ENCODE measurements at regions of chr7 and their contacts with region 1.

Region 1: DNA sequence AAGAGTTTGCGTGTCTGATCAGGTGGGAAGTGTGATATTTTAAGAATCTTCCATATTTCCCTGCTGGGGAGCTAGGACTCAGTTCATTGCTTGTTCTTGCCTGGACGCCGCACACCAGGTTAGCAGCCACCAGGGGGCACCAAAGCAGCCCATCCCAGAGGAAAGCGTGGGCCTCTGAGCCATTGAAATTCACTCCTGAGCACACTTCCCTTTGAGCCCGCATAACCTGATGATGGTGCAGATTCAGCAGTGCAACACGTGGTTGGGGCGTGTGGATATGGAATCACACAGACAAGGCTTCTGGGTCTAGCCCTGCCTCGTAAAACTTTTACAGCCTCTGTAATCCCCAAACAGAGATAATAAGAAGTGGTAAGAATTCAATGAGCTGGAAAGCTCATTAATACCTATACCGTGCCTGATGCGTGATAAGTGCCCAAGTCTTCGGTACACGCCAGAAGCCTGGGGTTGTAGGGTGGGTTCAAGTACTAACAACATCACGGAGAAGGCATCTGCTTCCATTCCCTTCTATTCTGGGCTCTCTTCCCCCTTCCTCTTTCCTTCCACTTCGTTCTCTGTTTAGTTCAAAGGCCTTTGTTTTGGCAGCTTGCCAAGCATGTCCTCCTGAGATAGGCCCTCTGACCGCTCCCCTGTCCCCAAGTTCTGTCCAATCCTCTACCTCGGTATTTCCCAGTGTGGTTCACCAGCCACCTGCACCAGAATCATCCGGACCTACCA is 130.1 kb upstream of the KMT2E start:
- DNase-seq: peak; percentile 90

Region 2: GRCh38 chr7:104848138-104848990 is 35.5 kb before region 1 on chr7:
- CTCF ChIA-PET with region 1: interaction called, 11 read pairs
- POLR2A ChIA-PET with region 1: no interaction called
- DNase-seq: peak; percentile 50

Region 3: GRCh38 chr7:104873346-104873849 is 10.5 kb before region 1 on chr7:
- CTCF ChIA-PET with region 1: interaction called, 13 read pairs
- POLR2A ChIA-PET with region 1: no interaction called
- DNase-seq: no peak

Region 4: DNA sequence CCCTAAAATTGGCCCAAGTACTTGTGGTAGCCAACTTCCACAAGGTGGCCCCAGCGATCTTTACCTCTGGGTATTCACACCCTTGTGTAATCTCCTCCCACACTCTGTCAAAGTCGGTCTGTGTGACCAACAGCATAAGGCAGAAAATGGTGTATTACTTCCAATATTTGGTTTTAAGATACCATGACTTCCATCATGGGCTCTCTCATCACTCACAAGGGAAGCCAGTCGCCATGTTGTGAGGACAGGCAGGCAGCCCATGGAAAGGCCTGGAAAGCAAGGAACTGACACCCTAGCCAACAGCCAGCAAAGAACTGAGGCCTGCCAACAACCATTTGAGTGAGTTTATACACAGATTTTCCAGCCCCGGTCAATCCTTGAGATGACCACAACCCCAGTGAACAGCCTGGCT is 39.1 kb after region 1 on chr7:
- CTCF ChIA-PET with region 1: interaction called, 23 read pairs
- POLR2A ChIA-PET with region 1: interaction called, 4 read pairs
- DNase-seq: peak; percentile 61

Region 5: GRCh38 chr7:104980841-104981671 is 97.2 kb after region 1 on chr7:
- CTCF ChIA-PET with region 1: no interaction called
- POLR2A ChIA-PET with region 1: no interaction called
- DNase-seq: peak; percentile 50

Measured in HEK293T (cell line).